ENCODE measurements at regions of chr16 and their contacts with region 1.

Region 1: GRCh38 chr16:4616047-4616811 is 1.5 kb upstream of the UBALD1 start:
- DNase-seq: peak; percentile 100
- ATAC-seq: peak; percentile 90 to 91
- H3K4me3 ChIP-seq: peak overlapping the region; percentile 64 to 91 (median 80)
- H3K27ac ChIP-seq: peak overlapping the region; percentile 95 to 99 (median 97)
- H3K4me1 ChIP-seq: peaks cover 42 to 60% of the 10 kb centered on the region in 2 donors
- H3K27me3 ChIP-seq: no peaks in the 10 kb centered on the region
- CTCF ChIP-seq: peak in 2 of 5 experiments; percentile 28 to 40
- POLR2A ChIP-seq: peak; percentile 94

Region 2: GRCh38 chr16:4506450-4506849 is 109.8 kb before region 1 on chr16:
- in situ Hi-C with region 1: loop called in 1 of 4 experiments (anchors 25 kb)
- intact Hi-C with region 1: loop called (anchors 5 kb)
- DNase-seq: peak; percentile 44 to 74
- ATAC-seq: peak; percentile 95 to 97
- H3K4me3 ChIP-seq: no peak overlapping the region
- H3K27ac ChIP-seq: peak overlapping the region in 3 of 4 donors; percentile 22 to 46 (median 45)
- H3K4me1 ChIP-seq: peaks cover 3 to 12% of the 10 kb centered on the region in 2 donors
- H3K27me3 ChIP-seq: no peaks in the 10 kb centered on the region
- CTCF ChIP-seq: peak; percentile 75 to 86 (median 81)
- POLR2A ChIP-seq: no peak

Region 3: GRCh38 chr16:4538350-4539235 is 77.6 kb before region 1 on chr16 and contains the start of gene CDIP1:
- in situ Hi-C with region 1: no loop called
- intact Hi-C with region 1: loop called (anchors 1 kb)
- DNase-seq: peak; percentile 91 to 96
- ATAC-seq: peak; percentile 92 to 93
- H3K4me3 ChIP-seq: peak within 1 kb of the TSS; percentile 67 to 90 (median 71)
- H3K27ac ChIP-seq: peak within 1 kb of the TSS; percentile 85 to 98 (median 93)
- H3K4me1 ChIP-seq: peaks cover 27 to 34% of the 10 kb centered on the region in 2 donors
- H3K27me3 ChIP-seq: no peaks in the 10 kb centered on the region
- CTCF ChIP-seq: peak in 2 of 5 experiments; percentile 7 to 15
- POLR2A ChIP-seq: peak; percentile 86 to 87
- total RNA-seq, gene CDIP1: 23.8 to 34.2 (median 25.4) TPM

Region 4: DNA sequence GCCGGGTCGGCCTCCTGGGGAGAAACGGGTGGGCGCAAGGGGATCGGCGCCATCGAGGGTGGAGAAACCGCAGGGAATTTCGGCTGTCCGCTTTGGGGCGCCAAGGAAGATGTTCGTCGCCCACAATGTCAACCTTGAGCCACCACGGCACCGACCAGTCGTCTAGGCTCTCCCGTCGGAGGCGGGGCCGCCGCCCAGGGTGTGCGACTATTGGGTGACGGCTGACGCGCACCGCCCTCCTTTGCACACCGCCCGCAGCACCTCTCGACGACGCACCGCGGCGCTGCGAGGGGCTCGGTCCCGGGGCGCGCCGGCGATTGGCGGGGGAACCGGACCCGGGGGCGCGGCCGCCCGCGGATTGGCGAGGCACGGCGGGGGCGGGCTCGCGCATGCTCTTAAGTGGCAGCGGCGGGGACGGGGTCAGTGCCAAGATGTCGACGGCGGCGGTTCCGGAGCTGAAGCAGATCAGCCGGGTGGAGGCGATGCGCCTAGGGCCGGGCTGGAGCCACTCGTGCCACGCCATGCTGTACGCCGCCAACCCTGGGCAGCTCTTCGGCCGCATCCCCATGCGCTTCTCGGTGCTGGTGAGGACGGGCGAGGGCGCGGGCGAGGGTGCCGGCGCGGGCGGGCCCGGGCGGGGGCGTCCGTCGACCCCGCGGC is 77.2 kb after region 1 on chr16 and contains the start of gene NUDT16L1:
- in situ Hi-C with region 1: no loop called
- intact Hi-C with region 1: loop called (anchors 1 kb)
- DNase-seq: peak; percentile 90 to 95
- ATAC-seq: peak; percentile 83 to 86
- H3K4me3 ChIP-seq: peak within 1 kb of the TSS; percentile 68 to 90 (median 82)
- H3K27ac ChIP-seq: peak within 1 kb of the TSS; percentile 66 to 89 (median 82)
- H3K4me1 ChIP-seq: peaks cover 19 to 25% of the 10 kb centered on the region in 2 donors
- H3K27me3 ChIP-seq: no peaks in the 10 kb centered on the region
- CTCF ChIP-seq: peak in 4 of 5 experiments; percentile 31 to 57 (median 42)
- POLR2A ChIP-seq: peak; percentile 43 to 50
- total RNA-seq, gene NUDT16L1: 7.4 to 10.2 (median 8.8) TPM

Region 5: DNA sequence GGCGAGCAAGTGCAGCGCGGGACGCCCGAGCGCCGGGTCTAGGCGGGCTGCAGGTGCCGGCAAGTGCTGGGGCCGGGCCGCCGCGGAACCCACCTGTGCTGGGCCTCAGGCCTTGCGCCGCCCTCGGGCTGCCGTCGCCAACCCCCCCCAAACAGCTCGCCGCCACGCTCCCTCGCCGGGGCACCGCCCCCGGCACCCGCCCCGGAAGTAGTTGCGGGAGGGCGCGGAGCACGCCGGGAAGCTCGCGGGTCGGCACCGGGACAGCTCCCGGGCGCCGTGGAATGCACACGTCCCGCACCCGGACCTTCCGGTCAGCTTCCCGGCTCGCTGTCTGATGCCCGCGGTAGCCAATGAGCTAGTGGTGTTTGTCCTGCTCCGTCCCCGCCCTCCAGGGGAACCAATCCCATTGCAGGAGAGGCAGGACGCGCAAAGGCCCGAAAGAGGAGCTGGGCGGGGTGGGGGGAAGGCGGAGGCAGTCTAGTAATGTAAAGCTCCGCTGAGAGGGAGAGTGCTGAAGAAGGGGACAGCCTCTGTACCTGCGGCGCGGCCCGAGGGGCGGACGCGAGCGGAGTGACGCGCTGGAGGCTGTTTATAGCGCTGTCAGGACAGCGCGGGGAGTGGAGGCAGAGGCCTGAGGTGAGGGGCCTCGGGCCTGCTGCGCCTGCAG is 118.0 kb after region 1 on chr16 and contains the starts of genes ANKS3 and DNAAF8:
- in situ Hi-C with region 1: no loop called
- intact Hi-C with region 1: loop called (anchors 1 kb)
- DNase-seq: peak; percentile 97
- ATAC-seq: peak; percentile 98
- H3K4me3 ChIP-seq: peak within 1 kb of the TSS; percentile 92 to 100 (median 92)
- H3K27ac ChIP-seq: peak within 1 kb of the TSS; percentile 84 to 97 (median 85)
- H3K4me1 ChIP-seq: peaks cover 13 to 16% of the 10 kb centered on the region in 2 donors
- H3K27me3 ChIP-seq: no peaks in the 10 kb centered on the region
- CTCF ChIP-seq: no peak
- POLR2A ChIP-seq: peak; percentile 48 to 50
- total RNA-seq, gene ANKS3: 6.7 to 16.6 (median 9.0) TPM
- total RNA-seq, gene DNAAF8: 0.44 to 1.2 (median 0.91) TPM

Region 6: GRCh38 chr16:4846891-4847773 is 230.9 kb after region 1 on chr16 and contains the starts of genes GLYR1 and UBN1:
- in situ Hi-C with region 1: no loop called
- intact Hi-C with region 1: loop called (anchors 2 kb)
- DNase-seq: peak; percentile 99
- ATAC-seq: peak; percentile 90 to 91
- H3K4me3 ChIP-seq: peak within 1 kb of the TSS; percentile 80 to 98 (median 94)
- H3K27ac ChIP-seq: peak within 1 kb of the TSS; percentile 96 to 99 (median 99)
- H3K4me1 ChIP-seq: peaks cover 50 to 54% of the 10 kb centered on the region in 2 donors
- H3K27me3 ChIP-seq: no peaks in the 10 kb centered on the region
- CTCF ChIP-seq: no peak
- POLR2A ChIP-seq: peak; percentile 95 to 96
- total RNA-seq, gene GLYR1: 39.4 to 56.7 (median 53.0) TPM
- total RNA-seq, gene UBN1: 25.3 to 33.4 (median 28.2) TPM

Region 7: DNA sequence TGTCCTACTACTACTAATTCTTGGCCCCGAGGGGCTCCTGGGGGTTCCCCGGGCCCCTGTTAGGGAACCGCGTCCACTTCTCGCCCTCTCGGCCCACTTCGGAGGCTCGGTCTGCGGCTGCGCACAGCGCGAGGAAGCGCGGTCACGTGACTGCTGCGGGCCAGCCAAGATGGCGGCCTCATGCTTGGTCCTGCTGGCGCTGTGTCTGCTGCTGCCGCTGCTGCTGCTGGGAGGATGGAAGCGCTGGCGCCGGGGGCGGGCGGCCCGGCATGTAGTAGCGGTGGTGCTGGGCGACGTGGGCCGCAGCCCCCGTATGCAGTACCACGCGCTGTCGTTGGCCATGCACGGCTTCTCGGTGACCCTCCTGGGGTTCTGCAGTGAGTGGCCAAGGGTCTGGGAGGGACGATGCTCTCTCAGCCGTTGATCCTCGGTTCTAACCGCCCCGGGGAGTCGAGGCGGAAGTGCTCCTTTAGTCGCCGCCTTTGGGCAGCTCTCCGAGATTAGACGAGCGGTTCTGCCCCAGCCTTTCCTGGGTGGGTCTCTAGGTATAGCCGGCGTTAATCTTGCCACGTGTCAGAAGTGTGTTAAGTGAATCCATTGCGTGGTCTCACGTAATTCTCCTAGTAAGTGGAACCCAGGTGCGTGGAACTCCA is 455.6 kb after region 1 on chr16 and contains the start of gene ALG1:
- in situ Hi-C with region 1: no loop called
- intact Hi-C with region 1: loop called (anchors 10 kb)
- DNase-seq: peak; percentile 72 to 84
- ATAC-seq: peak; percentile 95 to 97
- H3K4me3 ChIP-seq: peak within 1 kb of the TSS; percentile 76 to 98 (median 91)
- H3K27ac ChIP-seq: peak within 1 kb of the TSS; percentile 72 to 88 (median 82)
- H3K4me1 ChIP-seq: peaks cover 8 to 13% of the 10 kb centered on the region in 2 donors
- H3K27me3 ChIP-seq: no peaks in the 10 kb centered on the region
- CTCF ChIP-seq: peak in 1 of 5 experiments; percentile 29
- POLR2A ChIP-seq: peak; percentile 41 to 52
- total RNA-seq, gene ALG1: 4.8 to 17.1 (median 9.7) TPM